ENCODE measurements at regions of chr3 and their contacts with region 1.

Region 1: GRCh38 chr3:151227807-151228665 is 25.0 kb upstream of the GPR171 start:
- DNase-seq: peak; percentile 76 to 81 (median 77)
- ATAC-seq: peak; percentile 94
- H3K4me3 ChIP-seq: no peak overlapping the region
- H3K27ac ChIP-seq: no peak overlapping the region
- H3K4me1 ChIP-seq: no peaks in the 10 kb centered on the region
- H3K27me3 ChIP-seq: peaks cover 5 to 9% of the 10 kb centered on the region in 2 experiments
- CTCF ChIP-seq: peak; percentile 81 to 90 (median 86)
- EP300 ChIP-seq: no peak
- POLR2A ChIP-seq: no peak
- RAD21 ChIP-seq: peak; percentile 86 to 92

Region 2: DNA sequence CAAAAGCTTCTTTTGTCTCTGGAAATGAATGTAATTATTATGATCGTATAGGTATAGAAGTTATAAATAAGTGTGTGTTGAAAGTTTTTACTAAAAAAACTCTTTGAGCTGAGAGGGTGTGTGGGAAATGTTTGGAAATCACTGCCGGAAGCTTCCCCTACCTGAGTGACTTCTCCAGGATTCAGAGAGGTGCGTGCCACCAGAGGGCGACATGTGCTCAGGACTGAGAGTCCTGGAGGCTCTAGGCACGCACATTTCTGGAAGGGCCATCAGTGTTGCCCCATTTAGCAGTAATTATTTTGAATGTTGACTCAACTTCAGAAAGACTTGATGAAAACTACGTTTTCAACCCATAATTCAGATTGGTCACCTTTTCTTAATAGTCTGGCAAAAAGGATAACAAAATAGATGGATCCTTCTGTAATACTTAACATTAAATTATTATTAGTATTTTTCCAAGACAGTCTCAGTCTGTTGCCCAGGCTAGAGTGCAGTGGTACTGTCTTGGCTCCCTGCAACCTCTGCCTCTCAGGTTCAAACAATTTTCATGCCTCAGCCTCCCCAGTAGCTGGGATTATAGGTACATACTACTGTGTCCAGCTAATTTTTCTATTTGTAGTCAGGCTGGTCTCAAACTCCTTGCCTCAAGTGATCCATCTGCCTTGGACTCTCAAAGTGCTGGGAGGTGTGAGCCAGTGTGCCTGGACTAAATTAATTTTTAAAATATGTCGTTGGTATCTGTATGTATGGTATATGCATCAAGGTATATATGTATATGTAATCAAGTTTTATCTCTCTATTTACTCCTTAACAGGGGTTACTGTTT is 59.6 kb before region 1 on chr3:
- CTCF ChIA-PET with region 1: no interaction called
- POLR2A ChIA-PET with region 1: no interaction called
- in situ Hi-C with region 1: no loop called
- intact Hi-C with region 1: loop called (anchors 2 kb)
- DNase-seq: peak; percentile 42 to 71 (median 52)
- ATAC-seq: peak; percentile 92
- H3K4me3 ChIP-seq: no peak overlapping the region
- H3K27ac ChIP-seq: no peak overlapping the region
- H3K4me1 ChIP-seq: no peaks in the 10 kb centered on the region
- H3K27me3 ChIP-seq: peaks cover 8 to 10% of the 10 kb centered on the region in 2 experiments; a peak in 3 of 5 replicates
- CTCF ChIP-seq: peak; percentile 76 to 79 (median 76)
- EP300 ChIP-seq: no peak
- POLR2A ChIP-seq: no peak
- RAD21 ChIP-seq: peak; percentile 69 to 80

Region 3: GRCh38 chr3:151282921-151283320 is 54.9 kb after region 1 on chr3:
- CTCF ChIA-PET with region 1: interaction called, 23 read pairs
- POLR2A ChIA-PET with region 1: no interaction called
- in situ Hi-C with region 1: no loop called
- intact Hi-C with region 1: loop called (anchors 1 kb)
- DNase-seq: peak; percentile 41 to 51 (median 47)
- ATAC-seq: peak; percentile 59; the same call in 2 of the 3 replicates
- H3K4me3 ChIP-seq: no peak overlapping the region
- H3K27ac ChIP-seq: no peak overlapping the region
- H3K4me1 ChIP-seq: no peaks in the 10 kb centered on the region; a peak in 2 of 5 replicates
- H3K27me3 ChIP-seq: no peaks in the 10 kb centered on the region
- CTCF ChIP-seq: peak; percentile 47 to 81 (median 54); a peak in 4 of 6 replicates
- EP300 ChIP-seq: no peak
- POLR2A ChIP-seq: no peak
- RAD21 ChIP-seq: peak; percentile 83 to 85

Region 4: DNA sequence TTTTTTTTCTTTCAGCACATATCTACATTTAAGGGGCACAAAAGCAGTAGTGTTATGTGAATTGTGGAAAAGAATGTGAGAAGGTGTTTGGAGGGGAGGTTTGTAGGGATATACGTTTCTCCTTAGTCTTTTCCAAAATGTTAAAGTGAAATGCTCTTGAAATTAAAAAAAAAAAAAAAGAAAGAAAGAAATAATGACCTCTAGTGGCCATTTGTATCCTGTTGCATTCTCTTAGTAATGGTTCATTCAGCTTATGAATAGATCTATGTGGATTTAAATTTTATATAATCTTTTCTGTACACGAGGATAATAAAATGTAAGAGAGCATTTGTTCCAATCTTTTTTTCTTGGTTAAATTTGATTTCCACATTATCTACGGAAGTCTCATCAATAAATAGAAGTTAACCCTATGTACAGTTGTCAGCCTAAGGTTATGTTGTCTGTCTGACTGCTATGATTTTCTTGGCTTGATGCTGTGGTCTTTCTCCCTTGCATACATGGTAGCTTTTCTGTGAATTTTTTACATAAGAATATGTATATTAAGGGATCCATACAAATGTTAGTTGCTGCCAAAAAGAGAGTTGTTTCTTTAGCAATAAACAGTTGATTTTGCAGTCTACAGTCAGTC is 99.6 kb after region 1 on chr3:
- CTCF ChIA-PET with region 1: interaction called, 9 read pairs
- POLR2A ChIA-PET with region 1: no interaction called
- in situ Hi-C with region 1: no loop called
- intact Hi-C with region 1: loop called (anchors 2 kb)
- DNase-seq: peak in 1 of 4 experiments; percentile 9
- ATAC-seq: no peak
- H3K4me3 ChIP-seq: no peak overlapping the region
- H3K27ac ChIP-seq: no peak overlapping the region
- H3K4me1 ChIP-seq: no peaks in the 10 kb centered on the region
- H3K27me3 ChIP-seq: peaks cover 0 to 8% of the 10 kb centered on the region in 2 experiments; a peak in 1 of 5 replicates
- CTCF ChIP-seq: peak in 2 of 3 experiments; percentile 21 to 55; a peak in 4 of 6 replicates
- EP300 ChIP-seq: no peak
- POLR2A ChIP-seq: no peak
- RAD21 ChIP-seq: peak in 1 of 2 experiments; percentile 25; a peak in 2 of 4 replicates

Measured in K562 (cell line).